Activated B cell treated with CpG ODN at 0.5 μM for 24 hours (primary cell): ENCODE measurements at regions of chr5 and their contacts with region 1.

Region 1: GRCh38 chr5:177154003-177154643 is 20.6 kb downstream of the NSD1 start:
- DNase-seq: no peak
- ATAC-seq: no peak
- H3K4me3 Mint-ChIP-seq: no peak overlapping the region
- H3K27ac Mint-ChIP-seq: no peak overlapping the region
- H3K4me1 Mint-ChIP-seq: peaks cover 20% of the 10 kb centered on the region
- H3K27me3 Mint-ChIP-seq: no peaks in the 10 kb centered on the region
- CTCF ChIP-seq: no peak

Region 2: GRCh38 chr5:177140312-177140711 is 13.8 kb before region 1 on chr5:
- CTCF ChIA-PET with region 1: no interaction called
- POLR2A ChIA-PET with region 1: interaction called, 8 read pairs
- intact Hi-C with region 1: loop called (anchors 2 kb)
- DNase-seq: no peak
- ATAC-seq: no peak
- H3K4me3 Mint-ChIP-seq: no peak overlapping the region
- H3K27ac Mint-ChIP-seq: no peak overlapping the region
- H3K4me1 Mint-ChIP-seq: peaks cover 54% of the 10 kb centered on the region
- H3K27me3 Mint-ChIP-seq: no peaks in the 10 kb centered on the region
- CTCF ChIP-seq: no peak

Region 3: GRCh38 chr5:177176175-177176711 is 22.1 kb after region 1 on chr5:
- CTCF ChIA-PET with region 1: no interaction called
- POLR2A ChIA-PET with region 1: interaction called, 4 read pairs
- intact Hi-C with region 1: loop called (anchors 2 kb)
- DNase-seq: no peak
- ATAC-seq: no peak
- H3K4me3 Mint-ChIP-seq: peak overlapping the region; percentile 15
- H3K27ac Mint-ChIP-seq: peak overlapping the region; percentile 12
- H3K4me1 Mint-ChIP-seq: peaks cover 55% of the 10 kb centered on the region
- H3K27me3 Mint-ChIP-seq: no peaks in the 10 kb centered on the region
- CTCF ChIP-seq: no peak

Region 4: DNA sequence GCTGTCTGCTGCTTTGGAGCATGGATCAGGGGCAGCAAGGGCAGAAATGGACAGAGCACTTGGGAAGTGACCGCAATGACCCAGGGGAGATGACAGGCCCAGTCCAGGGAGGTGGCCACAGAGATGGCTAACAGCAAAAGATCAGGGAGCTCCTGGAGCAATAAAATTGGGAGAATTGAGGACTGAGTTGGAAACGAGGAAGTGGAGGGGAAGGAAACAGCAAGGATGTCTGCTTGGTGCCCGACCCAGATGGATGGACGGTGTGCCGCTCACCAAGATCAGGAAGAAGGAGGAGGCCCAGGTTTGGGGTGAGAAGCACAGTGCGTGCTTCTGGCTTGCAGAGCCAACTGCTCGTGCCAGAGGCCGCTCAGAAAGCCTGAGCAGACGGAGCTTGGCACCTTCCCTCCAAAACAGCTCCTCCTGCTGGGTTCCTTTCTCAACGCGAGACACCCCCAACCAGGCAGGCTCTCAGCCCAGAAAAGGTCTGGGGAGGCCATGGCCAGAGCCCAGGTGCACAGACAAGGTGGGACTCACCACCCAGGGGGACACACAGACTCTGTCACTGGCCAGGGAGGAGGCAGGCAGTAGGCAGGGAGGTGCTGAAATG is 228.4 kb after region 1 on chr5:
- CTCF ChIA-PET with region 1: no interaction called
- POLR2A ChIA-PET with region 1: no interaction called
- intact Hi-C with region 1: no loop called
- DNase-seq: no peak
- ATAC-seq: no peak
- H3K4me3 Mint-ChIP-seq: no peak overlapping the region
- H3K27ac Mint-ChIP-seq: no peak overlapping the region
- H3K4me1 Mint-ChIP-seq: peaks cover 3% of the 10 kb centered on the region
- H3K27me3 Mint-ChIP-seq: peaks cover 11% of the 10 kb centered on the region
- CTCF ChIP-seq: no peak

Region 5: DNA sequence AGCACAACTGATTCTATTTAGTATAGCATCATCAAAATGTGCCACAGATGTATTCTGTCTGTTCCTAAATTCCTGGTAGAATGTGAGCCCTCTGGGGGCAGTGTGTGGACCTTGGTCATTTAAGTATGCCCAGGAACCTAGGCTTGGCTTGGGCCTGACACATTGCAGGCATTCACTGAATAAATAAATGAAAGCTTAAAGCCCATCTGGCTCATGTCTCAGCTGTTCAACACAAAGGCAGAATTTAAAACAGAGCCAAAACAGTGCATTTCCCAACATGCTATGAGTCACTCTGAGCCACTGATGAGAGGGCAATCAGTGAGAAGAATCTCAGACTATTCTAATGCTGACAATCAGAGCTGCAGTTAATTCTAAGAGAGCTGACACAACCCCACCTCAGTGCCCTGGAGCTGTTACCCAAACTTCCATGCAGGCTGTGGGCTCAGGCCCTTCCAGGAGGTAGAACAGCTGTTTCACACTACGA is 392.2 kb after region 1 on chr5:
- CTCF ChIA-PET with region 1: no interaction called
- POLR2A ChIA-PET with region 1: no interaction called
- intact Hi-C with region 1: no loop called
- DNase-seq: no peak
- ATAC-seq: no peak
- H3K4me3 Mint-ChIP-seq: no peak overlapping the region
- H3K27ac Mint-ChIP-seq: no peak overlapping the region
- H3K4me1 Mint-ChIP-seq: peaks cover 8% of the 10 kb centered on the region
- H3K27me3 Mint-ChIP-seq: no peaks in the 10 kb centered on the region
- CTCF ChIP-seq: no peak

Region 6: DNA sequence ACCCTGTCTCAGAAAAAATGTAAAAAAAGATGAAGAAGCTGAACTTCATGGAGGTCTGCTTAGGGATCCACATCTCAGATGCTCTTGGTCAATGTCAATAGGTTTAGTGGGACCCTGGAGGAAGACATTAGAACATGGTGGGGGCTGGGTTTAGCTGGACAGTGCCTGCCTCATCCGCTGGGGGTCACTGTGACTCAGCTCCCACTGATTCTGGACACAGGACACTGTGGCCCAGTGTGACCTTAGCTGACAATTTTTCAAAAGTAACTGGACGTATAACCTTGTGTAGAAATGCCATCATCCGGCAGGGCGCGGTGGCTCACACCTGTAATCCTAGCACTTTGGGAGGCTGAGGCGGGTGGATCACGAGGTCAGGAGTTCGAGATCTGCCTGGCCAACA is 1042.9 kb after region 1 on chr5:
- CTCF ChIA-PET with region 1: no interaction called
- POLR2A ChIA-PET with region 1: no interaction called
- intact Hi-C with region 1: no loop called
- DNase-seq: no peak
- ATAC-seq: no peak
- H3K4me3 Mint-ChIP-seq: no peak overlapping the region
- H3K27ac Mint-ChIP-seq: no peak overlapping the region
- H3K4me1 Mint-ChIP-seq: no peaks in the 10 kb centered on the region
- H3K27me3 Mint-ChIP-seq: peaks cover 20% of the 10 kb centered on the region
- CTCF ChIP-seq: no peak